Upper lobe of right lung (tissue), 1 donor: ENCODE measurements at regions of chr1 and their contacts with region 1.

Region 1: DNA sequence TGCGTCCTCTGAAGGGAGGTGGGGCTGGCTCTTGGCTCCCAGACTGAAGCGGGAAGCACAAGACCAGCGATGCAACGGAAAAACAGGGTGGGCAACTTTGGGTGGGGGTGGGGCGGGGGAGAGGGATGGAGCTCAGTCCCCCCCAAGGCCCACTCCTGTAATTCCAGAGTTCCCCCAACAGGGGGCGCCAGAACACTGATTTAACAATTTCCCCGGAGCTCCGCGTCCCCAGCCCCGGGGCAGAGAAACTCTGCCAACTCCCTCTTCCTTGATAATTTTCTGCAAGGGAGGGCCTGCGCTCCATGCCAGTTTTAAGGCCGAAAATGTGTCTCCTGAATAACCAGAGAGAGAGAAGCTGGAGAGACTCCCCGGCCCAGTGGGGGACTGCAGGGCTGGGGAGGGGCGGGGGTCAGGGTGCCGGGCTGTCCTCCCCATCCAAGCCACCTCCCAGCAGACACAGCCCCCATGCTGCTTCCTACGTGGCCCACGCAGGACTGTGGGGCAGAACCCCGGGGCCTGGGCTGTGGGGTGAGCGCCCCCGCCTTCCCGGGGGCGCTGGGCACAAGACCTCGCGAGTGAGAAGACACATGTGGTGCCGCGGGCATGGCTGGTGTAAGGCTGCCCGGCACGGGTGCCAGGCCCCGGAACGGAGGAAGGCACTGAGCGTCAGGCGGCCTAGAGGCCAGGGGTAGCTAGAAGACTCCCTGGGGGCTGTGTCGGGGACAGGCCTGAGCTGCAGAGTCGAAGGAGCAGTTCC is 51.4 kb downstream of the KIF21B start:
- DNase-seq: peak; percentile 76
- ATAC-seq: peak; percentile 69
- H3K4me3 ChIP-seq: no peak overlapping the region
- H3K27ac ChIP-seq: no peak overlapping the region
- H3K4me1 ChIP-seq: peaks cover 4% of the 10 kb centered on the region
- H3K27me3 ChIP-seq: no peaks in the 10 kb centered on the region
- CTCF ChIP-seq: peak; percentile 96

Region 2: DNA sequence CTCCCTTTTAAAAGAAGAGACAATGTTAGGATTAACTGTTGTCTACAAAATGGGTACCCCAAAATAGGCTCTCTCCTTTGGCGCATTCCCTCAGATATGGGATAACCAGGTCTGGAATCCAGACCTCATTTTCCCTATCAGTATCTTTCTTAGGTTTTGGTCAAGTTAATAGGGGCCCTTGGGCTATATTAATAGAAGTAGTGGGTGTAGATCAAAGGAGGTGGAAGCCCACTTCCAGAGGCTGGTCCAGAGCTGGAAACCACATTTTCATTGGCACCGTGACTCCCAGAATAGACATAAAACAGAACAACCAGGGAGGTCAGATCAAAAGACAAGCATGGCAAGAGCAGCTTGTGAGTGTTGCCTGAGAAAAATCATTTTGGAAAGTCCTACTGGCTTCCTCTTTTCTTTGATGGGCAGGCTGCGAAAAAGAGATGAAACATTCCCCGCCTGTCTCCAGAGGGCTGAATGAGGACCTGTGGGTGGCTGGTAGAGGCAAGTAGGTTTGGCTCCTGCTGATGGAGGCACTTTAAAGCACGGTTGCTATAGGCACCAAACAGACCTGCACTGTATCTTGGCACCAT is 77.2 kb after region 1 on chr1:
- intact Hi-C with region 1: loop called (anchors 5 kb)
- DNase-seq: no peak
- ATAC-seq: no peak
- H3K4me3 ChIP-seq: no peak overlapping the region
- H3K27ac ChIP-seq: no peak overlapping the region
- H3K4me1 ChIP-seq: peaks cover 3% of the 10 kb centered on the region
- H3K27me3 ChIP-seq: no peaks in the 10 kb centered on the region
- CTCF ChIP-seq: no peak

Region 3: GRCh38 chr1:201114236-201115131 is 142.4 kb after region 1 on chr1:
- intact Hi-C with region 1: loop called (anchors 10 kb)
- DNase-seq: peak; percentile 93
- ATAC-seq: peak; percentile 96
- H3K4me3 ChIP-seq: peak overlapping the region; percentile 63
- H3K27ac ChIP-seq: peak overlapping the region; percentile 74
- H3K4me1 ChIP-seq: peaks cover 2% of the 10 kb centered on the region
- H3K27me3 ChIP-seq: peaks cover 3% of the 10 kb centered on the region
- CTCF ChIP-seq: peak; percentile 80